ENCODE measurements at regions of chr13 and their contacts with region 1.

Region 1: GRCh38 chr13:28324181-28324789 is 170.6 kb downstream of the FLT1 start:
- DNase-seq: peak in 1 of 2 donors; percentile 81
- ATAC-seq: peak; percentile 75 to 91 (median 79)
- H3K4me3 ChIP-seq: no peak overlapping the region
- H3K27ac ChIP-seq: peak overlapping the region in 8 of 10 donors; percentile 23 to 80 (median 54)
- H3K4me1 ChIP-seq: peaks cover under 1 to 66% (median 18%) of the 10 kb centered on the region in 9 donors
- H3K27me3 ChIP-seq: peaks cover 0 to 6% (median 0%) of the 10 kb centered on the region in 7 donors
- CTCF ChIP-seq: peak; percentile 64 to 89 (median 82)

Region 2: GRCh38 chr13:28313579-28313978 is 10.7 kb before region 1 on chr13:
- intact Hi-C with region 1: no loop called
- DNase-seq: no peak
- ATAC-seq: peak in 1 of 8 donors; percentile 30
- H3K4me3 ChIP-seq: no peak overlapping the region
- H3K27ac ChIP-seq: no peak overlapping the region
- H3K4me1 ChIP-seq: peaks cover 0 to 14% (median 4%) of the 10 kb centered on the region in 9 donors
- H3K27me3 ChIP-seq: no peaks in the 10 kb centered on the region
- CTCF ChIP-seq: peak in 5 of 9 donors; percentile 22 to 41 (median 24)

Region 3: GRCh38 chr13:28494776-28495537 is 170.7 kb after region 1 on chr13 and contains the start of gene FLT1:
- intact Hi-C with region 1: loop called in 4 of 10 experiments (anchors 10 kb)
- DNase-seq: peak; percentile 79 to 88
- ATAC-seq: peak; percentile 78 to 91 (median 84)
- H3K4me3 ChIP-seq: peak within 1 kb of the TSS; percentile 62 to 86 (median 74)
- H3K27ac ChIP-seq: peak within 1 kb of the TSS; percentile 85 to 98 (median 92)
- H3K4me1 ChIP-seq: peaks cover 0 to 61% (median 18%) of the 10 kb centered on the region in 9 donors
- H3K27me3 ChIP-seq: peaks cover 0 to 89% (median 59%) of the 10 kb centered on the region in 7 donors
- CTCF ChIP-seq: peak in 1 of 9 donors; percentile 7
- total RNA-seq, gene FLT1: 34.9 to 76.3 (median 47.2) TPM

Region 4: GRCh38 chr13:28574617-28575142 is 250.4 kb after region 1 on chr13:
- intact Hi-C with region 1: no loop called
- DNase-seq: peak in 1 of 2 donors; percentile 7
- ATAC-seq: peak in 6 of 8 donors; percentile 57 to 89 (median 76)
- H3K4me3 ChIP-seq: no peak overlapping the region
- H3K27ac ChIP-seq: peak overlapping the region in 1 of 10 donors; percentile 55
- H3K4me1 ChIP-seq: peaks cover 0 to 15% (median 0%) of the 10 kb centered on the region in 9 donors
- H3K27me3 ChIP-seq: peaks cover 0 to 10% (median 0%) of the 10 kb centered on the region in 7 donors
- CTCF ChIP-seq: no peak

Region 5: GRCh38 chr13:28636674-28637317 is 312.5 kb after region 1 on chr13:
- intact Hi-C with region 1: loop called (anchors 1 to 5 kb)
- DNase-seq: peak in 1 of 2 donors; percentile 71
- ATAC-seq: peak; percentile 65 to 86 (median 76)
- H3K4me3 ChIP-seq: no peak overlapping the region
- H3K27ac ChIP-seq: peak overlapping the region in 6 of 10 donors; percentile 29 to 63 (median 50)
- H3K4me1 ChIP-seq: peaks cover 0 to 43% (median 20%) of the 10 kb centered on the region in 9 donors
- H3K27me3 ChIP-seq: peaks cover 0 to 4% (median 0%) of the 10 kb centered on the region in 7 donors
- CTCF ChIP-seq: peak; percentile 72 to 95 (median 89)

Region 6: DNA sequence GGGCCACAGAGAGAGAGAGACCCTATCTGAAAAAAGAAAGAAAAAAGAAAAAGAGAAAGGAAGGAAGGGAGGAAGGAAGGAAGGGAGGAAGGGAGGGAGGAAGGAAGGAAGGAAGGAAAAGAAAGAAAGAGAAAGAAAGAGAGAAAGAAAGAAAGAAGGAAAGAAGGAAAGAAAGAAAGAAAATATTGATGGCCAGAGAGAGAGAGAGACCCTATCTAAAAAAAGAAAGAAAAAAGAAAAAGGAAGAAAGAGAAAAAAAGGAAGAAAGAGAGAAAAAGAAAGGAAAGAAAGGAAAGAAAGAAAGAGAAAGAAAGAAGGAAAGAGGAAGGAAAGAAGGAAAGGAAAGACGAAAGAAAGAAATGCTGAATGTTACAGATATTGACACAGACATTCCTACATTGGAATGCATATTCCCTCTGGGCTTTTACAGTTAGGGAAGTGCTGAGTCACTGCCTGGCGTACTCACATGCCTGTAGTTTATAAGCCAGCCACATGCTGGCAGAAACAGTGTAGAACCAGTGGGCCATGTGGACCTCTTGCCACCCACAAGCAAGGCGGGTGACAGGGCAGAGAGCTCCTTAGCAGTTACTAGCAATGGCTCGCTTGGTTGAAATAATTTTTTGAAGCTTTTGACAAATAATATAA is 429.1 kb after region 1 on chr13:
- intact Hi-C with region 1: loop called in 1 of 10 experiments (anchors 5 kb)
- DNase-seq: peak; percentile 21 to 54
- ATAC-seq: peak; percentile 60 to 86 (median 72)
- H3K4me3 ChIP-seq: no peak overlapping the region
- H3K27ac ChIP-seq: peak overlapping the region in 9 of 10 donors; percentile 74 to 89 (median 83)
- H3K4me1 ChIP-seq: peaks cover 0 to 52% (median 24%) of the 10 kb centered on the region in 9 donors
- H3K27me3 ChIP-seq: no peaks in the 10 kb centered on the region
- CTCF ChIP-seq: peak in 1 of 9 donors; percentile 14

Measured in heart right ventricle (tissue), 16 donors.